PC-9 (cell line): ENCODE measurements at regions of chr2 and their contacts with region 1.

Region 1: DNA sequence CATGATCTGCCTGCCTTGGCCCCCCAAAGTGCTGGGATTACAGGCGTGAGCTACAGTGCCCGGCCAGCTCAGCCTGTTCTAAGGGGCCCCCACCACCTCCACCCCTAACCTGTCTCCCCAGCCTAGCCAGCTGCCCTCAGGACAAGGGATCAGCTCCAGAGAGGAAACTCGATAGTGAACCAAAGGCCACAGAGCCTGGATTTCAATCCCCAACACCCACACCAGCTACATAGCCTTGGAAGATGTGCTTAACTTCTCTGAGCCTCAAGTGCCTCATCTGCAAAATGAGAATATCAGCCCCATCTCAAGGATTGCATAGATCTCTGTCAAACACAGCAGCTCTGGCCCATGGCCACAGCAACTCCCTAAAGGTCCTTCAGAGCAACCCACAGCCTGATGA is 32.0 kb downstream of the BIN1 start:
- DNase-seq: no peak
- H3K4me3 ChIP-seq: no peak overlapping the region
- H3K27ac ChIP-seq: no peak overlapping the region
- H3K4me1 ChIP-seq: peaks cover 6% of the 10 kb centered on the region
- H3K27me3 ChIP-seq: no peaks in the 10 kb centered on the region
- CTCF ChIP-seq: no peak

Region 2: DNA sequence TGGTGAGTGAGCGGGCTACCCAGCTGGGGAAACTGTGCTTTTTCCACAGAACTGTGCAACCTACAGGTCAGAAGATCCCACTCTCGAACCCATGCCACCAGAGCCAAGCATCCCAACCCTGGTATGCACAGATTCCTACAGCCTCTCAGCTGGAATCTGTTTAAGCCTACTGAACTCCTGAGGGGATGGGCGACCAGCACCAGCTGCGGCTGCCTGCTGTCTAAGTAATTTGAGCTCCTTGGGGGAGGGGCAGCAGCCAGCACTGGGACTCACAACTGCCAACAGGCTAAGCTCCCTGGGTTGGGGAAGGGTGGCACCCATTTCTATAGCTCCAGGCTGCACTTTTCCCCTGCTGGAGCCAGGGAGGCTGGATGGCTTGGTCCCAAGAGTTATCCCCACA is 133.4 kb after region 1 on chr2:
- CTCF ChIA-PET with region 1: no interaction called
- POLR2A ChIA-PET with region 1: no interaction called
- intact Hi-C with region 1: no loop called
- DNase-seq: peak; percentile 83 to 89
- H3K4me3 ChIP-seq: no peak overlapping the region
- H3K27ac ChIP-seq: peak overlapping the region; percentile 35; the same call in 1 of the 2 replicates
- H3K4me1 ChIP-seq: peaks cover 28% of the 10 kb centered on the region
- H3K27me3 ChIP-seq: no peaks in the 10 kb centered on the region
- CTCF ChIP-seq: no peak

Region 3: GRCh38 chr2:127909019-127909418 is 834.1 kb after region 1 on chr2:
- CTCF ChIA-PET with region 1: no interaction called
- POLR2A ChIA-PET with region 1: interaction called, 15 read pairs
- intact Hi-C with region 1: no loop called
- DNase-seq: peak; percentile 19 to 72
- H3K4me3 ChIP-seq: no peak overlapping the region
- H3K27ac ChIP-seq: no peak overlapping the region
- H3K4me1 ChIP-seq: peaks cover 7% of the 10 kb centered on the region
- H3K27me3 ChIP-seq: peaks cover 33% of the 10 kb centered on the region; the same call in 1 of the 2 replicates
- CTCF ChIP-seq: peak; percentile 29; the same call in 1 of the 2 replicates